H1 (cell line): ENCODE measurements at regions of chr16 and their contacts with region 1.

Region 1: DNA sequence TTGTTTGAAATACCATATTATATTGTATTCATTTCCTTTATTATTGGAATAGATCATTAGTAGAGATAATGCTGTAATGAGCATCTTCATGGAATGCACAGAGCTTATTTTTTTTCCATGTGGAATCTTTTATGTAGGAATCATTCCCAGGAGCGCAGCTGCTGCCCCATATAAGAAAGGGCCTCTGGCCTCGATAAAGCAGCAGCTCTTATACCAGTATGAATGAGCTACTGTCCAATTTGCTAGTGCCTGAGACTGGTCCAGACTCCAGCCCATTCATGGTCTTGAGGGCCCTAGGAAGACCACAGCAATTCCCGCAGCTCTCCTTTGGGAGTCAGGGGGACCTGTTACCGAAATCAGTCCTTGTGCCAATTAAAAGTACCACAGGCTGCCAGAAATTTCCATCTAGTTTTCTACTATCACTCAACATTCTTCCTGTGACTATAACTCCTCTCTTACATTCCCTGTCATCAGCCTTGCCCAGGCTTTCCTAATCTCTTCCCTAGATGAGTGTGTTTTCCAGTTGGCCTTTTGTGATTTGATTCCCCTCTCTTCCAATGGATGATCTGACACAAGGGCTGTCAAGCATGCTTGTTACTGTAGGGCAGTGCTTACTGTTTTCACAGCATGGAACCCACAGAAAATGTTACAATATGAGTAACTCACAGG is 1.9 kb downstream of the ZNF843 start:
- DNase-seq: no peak
- H3K4me3 ChIP-seq: no peak overlapping the region
- H3K27ac ChIP-seq: no peak overlapping the region
- H3K4me1 ChIP-seq: no peaks in the 10 kb centered on the region; a peak in 1 of 7 replicates
- H3K27me3 ChIP-seq: peaks cover 0 to 2% (median 0%) of the 10 kb centered on the region in 4 experiments; a peak in 1 of 7 replicates
- CTCF ChIP-seq: no peak
- EP300 ChIP-seq: no peak
- POLR2A ChIP-seq: no peak
- RAD21 ChIP-seq: no peak

Region 2: GRCh38 chr16:31367853-31368252 is 72.8 kb before region 1 on chr16:
- CTCF ChIA-PET with region 1: no interaction called
- POLR2A ChIA-PET with region 1: no interaction called
- DNase-seq: no peak
- H3K4me3 ChIP-seq: no peak overlapping the region
- H3K27ac ChIP-seq: no peak overlapping the region
- H3K4me1 ChIP-seq: no peaks in the 10 kb centered on the region
- H3K27me3 ChIP-seq: no peaks in the 10 kb centered on the region; a peak in 1 of 7 replicates
- CTCF ChIP-seq: no peak
- EP300 ChIP-seq: no peak
- POLR2A ChIP-seq: no peak
- RAD21 ChIP-seq: no peak

Region 3: DNA sequence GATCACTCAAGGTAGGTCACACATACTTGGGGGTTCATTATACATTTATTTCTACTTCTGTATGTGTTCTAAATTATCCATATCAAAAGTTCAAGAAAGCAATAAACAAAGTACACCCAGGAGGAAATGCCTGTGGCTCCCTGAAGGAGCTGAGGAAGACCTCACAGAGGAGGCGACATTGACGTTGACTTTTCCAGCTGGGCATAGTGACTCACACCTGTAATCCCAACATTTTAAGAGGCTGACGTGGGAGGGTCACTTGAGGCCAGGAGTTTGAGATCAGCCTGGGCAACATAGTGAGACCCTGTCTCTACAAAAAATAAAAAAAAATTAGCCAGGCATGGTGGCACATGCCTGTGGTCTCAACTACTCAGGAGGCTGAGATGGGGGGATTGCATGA is 31.2 kb before region 1 on chr16:
- CTCF ChIA-PET with region 1: no interaction called
- POLR2A ChIA-PET with region 1: no interaction called
- DNase-seq: no peak
- H3K4me3 ChIP-seq: no peak overlapping the region
- H3K27ac ChIP-seq: no peak overlapping the region
- H3K4me1 ChIP-seq: no peaks in the 10 kb centered on the region
- H3K27me3 ChIP-seq: no peaks in the 10 kb centered on the region
- CTCF ChIP-seq: no peak
- EP300 ChIP-seq: no peak
- POLR2A ChIP-seq: no peak
- RAD21 ChIP-seq: no peak

Region 4: GRCh38 chr16:31427441-31428278 is 13.0 kb before region 1 on chr16:
- CTCF ChIA-PET with region 1: interaction called, 36 read pairs
- POLR2A ChIA-PET with region 1: interaction called, 3 read pairs
- DNase-seq: peak in 1 of 2 experiments; percentile 61
- H3K4me3 ChIP-seq: peak overlapping the region in 3 of 4 experiments; percentile 2 to 50 (median 15); a peak in 5 of 8 replicates
- H3K27ac ChIP-seq: no peak overlapping the region
- H3K4me1 ChIP-seq: no peaks in the 10 kb centered on the region; a peak in 2 of 7 replicates
- H3K27me3 ChIP-seq: peaks cover 5 to 25% (median 24%) of the 10 kb centered on the region in 4 experiments
- CTCF ChIP-seq: no peak
- EP300 ChIP-seq: no peak
- POLR2A ChIP-seq: no peak
- RAD21 ChIP-seq: no peak

Region 5: GRCh38 chr16:31451681-31452351 is 11.2 kb after region 1 on chr16:
- CTCF ChIA-PET with region 1: interaction called, 32 read pairs
- POLR2A ChIA-PET with region 1: interaction called, 3 read pairs
- DNase-seq: no peak
- H3K4me3 ChIP-seq: no peak overlapping the region
- H3K27ac ChIP-seq: no peak overlapping the region
- H3K4me1 ChIP-seq: peaks cover 4 to 19% (median 12%) of the 10 kb centered on the region in 4 experiments
- H3K27me3 ChIP-seq: no peaks in the 10 kb centered on the region
- CTCF ChIP-seq: peak; percentile 60 to 74 (median 73)
- EP300 ChIP-seq: no peak
- POLR2A ChIP-seq: no peak
- RAD21 ChIP-seq: peak; percentile 53 to 64

Region 6: DNA sequence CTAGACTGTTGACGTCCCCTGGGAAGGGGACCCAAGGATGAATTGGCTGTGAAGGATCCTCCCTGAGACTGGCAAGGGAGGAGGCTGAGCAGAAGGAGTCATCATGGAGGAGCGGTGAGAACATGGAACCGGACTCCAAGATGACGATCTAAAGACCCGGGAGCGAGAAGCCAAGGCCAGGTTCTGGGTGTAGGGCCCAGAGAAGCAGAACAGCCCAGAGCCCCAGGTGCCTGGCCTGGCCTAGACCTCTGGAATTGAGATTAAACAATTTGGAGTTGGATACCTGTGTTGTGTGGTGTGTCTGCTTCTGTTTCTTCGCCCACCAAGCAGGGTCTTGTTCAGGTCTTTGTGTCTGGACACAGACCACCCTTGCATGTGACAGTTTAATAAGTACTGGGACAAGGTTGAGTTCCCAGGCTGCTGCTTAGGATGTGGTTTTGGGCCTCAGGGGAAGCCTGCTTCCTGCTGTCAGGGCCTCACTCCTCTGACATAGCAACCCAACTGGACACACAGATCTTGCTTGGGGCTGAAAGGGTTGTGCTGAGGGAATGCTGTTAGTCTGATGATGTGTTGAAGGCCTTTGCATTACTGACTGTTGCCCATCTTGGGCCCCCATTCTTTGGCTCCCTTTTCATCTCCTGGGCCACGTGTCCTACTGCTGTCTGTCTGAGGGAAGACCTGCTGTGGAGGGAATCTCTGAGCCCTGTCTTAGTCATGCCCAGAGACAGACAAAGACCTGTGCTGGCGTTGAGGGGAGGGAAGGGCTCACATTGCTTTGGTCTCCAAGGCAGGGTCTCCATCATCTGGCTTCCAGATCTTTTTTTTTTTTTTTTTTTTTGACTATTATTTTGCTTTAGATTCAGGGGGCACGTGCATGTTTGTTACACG is 26.5 kb after region 1 on chr16:
- CTCF ChIA-PET with region 1: no interaction called
- POLR2A ChIA-PET with region 1: no interaction called
- DNase-seq: no peak
- H3K4me3 ChIP-seq: no peak overlapping the region
- H3K27ac ChIP-seq: no peak overlapping the region
- H3K4me1 ChIP-seq: peaks cover 0 to 5% (median 0%) of the 10 kb centered on the region in 4 experiments; a peak in 2 of 7 replicates
- H3K27me3 ChIP-seq: peaks cover 0 to 5% (median 5%) of the 10 kb centered on the region in 4 experiments; a peak in 4 of 7 replicates
- CTCF ChIP-seq: no peak
- EP300 ChIP-seq: no peak
- POLR2A ChIP-seq: no peak
- RAD21 ChIP-seq: no peak